Colonic mucosa (tissue), 4 donors: ENCODE measurements at regions of chr18 and their contacts with region 1.

Region 1: DNA sequence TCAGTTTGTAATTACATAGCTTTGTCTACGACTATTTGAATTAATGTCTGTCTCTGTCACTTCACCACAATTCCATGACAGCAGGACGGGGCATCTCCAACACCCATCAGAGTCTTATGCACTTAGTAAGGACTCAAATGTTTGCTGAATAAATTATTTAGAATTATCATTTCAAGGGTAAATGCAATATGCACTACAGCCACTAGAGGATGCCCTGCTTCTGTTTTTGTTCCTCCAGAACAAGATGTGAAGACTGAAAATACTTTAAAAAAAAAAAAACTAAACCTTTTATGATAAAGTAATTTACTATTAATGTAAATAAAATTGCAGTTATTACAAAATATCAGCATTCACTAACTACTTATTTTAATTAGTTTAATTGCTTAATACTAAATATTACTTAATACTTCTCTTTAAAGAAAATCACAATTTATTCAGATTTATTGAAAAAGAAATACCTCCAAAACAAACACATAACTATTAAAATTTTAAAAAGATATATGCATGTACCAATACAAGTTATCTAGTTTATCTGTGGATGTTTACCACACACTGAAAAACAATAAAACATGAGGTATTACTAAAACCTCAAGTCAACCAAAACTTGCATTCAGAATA is 3.2 kb downstream of the PIGN start:
- DNase-seq: peak; percentile 54
- H3K4me3 ChIP-seq: no peak overlapping the region
- H3K27ac ChIP-seq: no peak overlapping the region
- H3K4me1 ChIP-seq: no peaks in the 10 kb centered on the region
- H3K27me3 ChIP-seq: no peaks in the 10 kb centered on the region
- CTCF ChIP-seq: peak; percentile 98

Region 2: GRCh38 chr18:61643884-61644647 is 539.6 kb before region 1 on chr18:
- intact Hi-C with region 1: no loop called
- DNase-seq: no peak
- H3K4me3 ChIP-seq: no peak overlapping the region
- H3K27ac ChIP-seq: no peak overlapping the region
- H3K4me1 ChIP-seq: no peaks in the 10 kb centered on the region
- H3K27me3 ChIP-seq: no peaks in the 10 kb centered on the region
- CTCF ChIP-seq: no peak

Region 3: GRCh38 chr18:62118328-62118727 is 65.4 kb before region 1 on chr18:
- intact Hi-C with region 1: no loop called
- DNase-seq: no peak
- H3K4me3 ChIP-seq: no peak overlapping the region
- H3K27ac ChIP-seq: no peak overlapping the region
- H3K4me1 ChIP-seq: no peaks in the 10 kb centered on the region
- H3K27me3 ChIP-seq: no peaks in the 10 kb centered on the region
- CTCF ChIP-seq: no peak

Region 4: DNA sequence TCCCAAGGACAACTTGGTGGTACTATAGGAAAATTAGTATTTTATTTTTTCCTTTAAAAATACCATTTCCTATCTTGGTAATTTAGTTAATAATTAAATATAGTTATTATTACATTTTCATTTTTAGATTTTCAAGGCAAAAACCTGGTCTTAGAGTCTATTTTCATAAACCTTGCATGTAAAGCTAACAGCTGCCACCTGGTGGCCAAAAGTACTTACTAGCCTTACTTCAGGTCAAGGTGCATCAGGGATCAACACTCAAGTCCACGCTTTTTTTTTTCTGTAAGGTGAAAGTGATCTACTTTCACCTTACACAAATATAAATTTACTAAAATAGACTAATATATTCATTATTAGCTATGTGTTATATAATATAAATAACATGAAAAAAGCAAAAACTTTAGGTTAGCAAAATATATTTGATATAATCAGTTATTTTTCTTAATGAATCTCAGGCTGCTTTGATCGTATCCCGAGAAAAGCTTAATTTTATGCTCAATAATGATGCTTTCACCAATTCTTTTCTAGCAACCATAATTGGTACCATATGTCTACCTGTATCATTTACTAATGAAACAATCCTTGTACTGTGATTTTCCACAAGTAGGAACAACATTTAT is 65.9 kb after region 1 on chr18:
- intact Hi-C with region 1: loop called (anchors 2 kb)
- DNase-seq: peak; percentile 84
- H3K4me3 ChIP-seq: no peak overlapping the region
- H3K27ac ChIP-seq: no peak overlapping the region
- H3K4me1 ChIP-seq: no peaks in the 10 kb centered on the region
- H3K27me3 ChIP-seq: no peaks in the 10 kb centered on the region
- CTCF ChIP-seq: peak; percentile 79